A673 (cell line): ENCODE measurements at regions of chr14 and their contacts with region 1.

Region 1: GRCh38 chr14:62604524-62604923 is 440.7 kb downstream of the KCNH5 start:
- DNase-seq: peak; percentile 65
- H3K4me3 ChIP-seq: no peak overlapping the region
- H3K27ac ChIP-seq: peak overlapping the region; percentile 69
- H3K4me1 ChIP-seq: peaks cover 30% of the 10 kb centered on the region
- H3K27me3 ChIP-seq: no peaks in the 10 kb centered on the region
- CTCF ChIP-seq: no peak

Region 2: GRCh38 chr14:62179367-62180018 is 425.0 kb before region 1 on chr14:
- CTCF ChIA-PET with region 1: no interaction called
- POLR2A ChIA-PET with region 1: no interaction called
- intact Hi-C with region 1: loop called (anchors 1 kb)
- DNase-seq: peak; percentile 92
- H3K4me3 ChIP-seq: no peak overlapping the region
- H3K27ac ChIP-seq: peak overlapping the region; percentile 2
- H3K4me1 ChIP-seq: peaks cover 29% of the 10 kb centered on the region
- H3K27me3 ChIP-seq: no peaks in the 10 kb centered on the region
- CTCF ChIP-seq: peak; percentile 79

Region 3: DNA sequence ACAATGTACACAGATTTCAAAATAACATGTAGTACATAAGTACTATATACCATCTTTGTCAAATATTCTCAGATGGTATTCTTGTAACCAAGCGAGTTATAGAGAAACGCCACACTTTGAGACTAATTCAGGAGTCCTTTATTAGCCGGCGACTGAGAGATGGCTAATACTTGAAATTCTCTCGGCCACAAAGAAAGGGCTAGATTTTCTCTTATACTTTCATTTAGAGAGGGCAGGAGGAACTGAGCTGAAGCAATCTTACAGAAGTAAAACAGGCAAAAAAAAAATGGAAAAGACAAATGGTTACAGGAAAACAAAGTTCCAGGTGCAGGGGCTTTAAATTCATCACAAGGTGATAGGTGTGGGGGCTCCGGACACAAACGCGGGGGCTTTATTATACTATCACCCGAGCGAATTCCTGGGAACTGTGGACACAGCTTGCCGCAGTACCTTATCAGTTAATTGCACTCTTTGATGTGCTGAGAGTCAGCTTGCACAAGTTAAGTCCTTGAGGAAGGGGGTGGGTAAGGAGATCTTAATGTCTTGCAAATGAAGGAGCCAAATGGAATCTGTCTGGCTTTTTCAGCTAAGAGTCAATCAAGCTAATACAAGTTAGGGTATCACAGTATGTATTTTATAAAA is 58.4 kb after region 1 on chr14:
- CTCF ChIA-PET with region 1: no interaction called
- POLR2A ChIA-PET with region 1: no interaction called
- intact Hi-C with region 1: no loop called
- DNase-seq: peak; percentile 31
- H3K4me3 ChIP-seq: no peak overlapping the region
- H3K27ac ChIP-seq: no peak overlapping the region
- H3K4me1 ChIP-seq: peaks cover 14% of the 10 kb centered on the region
- H3K27me3 ChIP-seq: no peaks in the 10 kb centered on the region
- CTCF ChIP-seq: no peak

Region 4: GRCh38 chr14:62896932-62897456 is 292.5 kb after region 1 on chr14:
- CTCF ChIA-PET with region 1: no interaction called
- POLR2A ChIA-PET with region 1: no interaction called
- intact Hi-C with region 1: loop called (anchors 10 kb)
- DNase-seq: peak; percentile 49
- H3K4me3 ChIP-seq: peak overlapping the region; percentile 6
- H3K27ac ChIP-seq: peak overlapping the region; percentile 63
- H3K4me1 ChIP-seq: peaks cover 24% of the 10 kb centered on the region
- H3K27me3 ChIP-seq: no peaks in the 10 kb centered on the region
- CTCF ChIP-seq: no peak

Region 5: GRCh38 chr14:63044994-63045611 is 440.6 kb after region 1 on chr14 and contains the start of gene KCNH5:
- CTCF ChIA-PET with region 1: no interaction called
- POLR2A ChIA-PET with region 1: no interaction called
- intact Hi-C with region 1: loop called (anchors 5 kb)
- DNase-seq: peak; percentile 88
- H3K4me3 ChIP-seq: peak within 1 kb of the TSS; percentile 80
- H3K27ac ChIP-seq: no peak within 1 kb of the TSS
- H3K4me1 ChIP-seq: peaks cover 28% of the 10 kb centered on the region
- H3K27me3 ChIP-seq: no peaks in the 10 kb centered on the region
- CTCF ChIP-seq: no peak
- total RNA-seq, gene KCNH5: 27.9 and 31.8 TPM in 2 replicates

Region 6: GRCh38 chr14:63134801-63135200 is 530.3 kb after region 1 on chr14:
- CTCF ChIA-PET with region 1: no interaction called
- POLR2A ChIA-PET with region 1: no interaction called
- intact Hi-C with region 1: loop called (anchors 1 kb)
- DNase-seq: peak; percentile 79
- H3K4me3 ChIP-seq: no peak overlapping the region
- H3K27ac ChIP-seq: no peak overlapping the region
- H3K4me1 ChIP-seq: peaks cover 15% of the 10 kb centered on the region
- H3K27me3 ChIP-seq: no peaks in the 10 kb centered on the region
- CTCF ChIP-seq: peak; percentile 69

Region 7: GRCh38 chr14:63276492-63277342 is 672.2 kb after region 1 on chr14:
- CTCF ChIA-PET with region 1: no interaction called
- POLR2A ChIA-PET with region 1: no interaction called
- intact Hi-C with region 1: loop called (anchors 5 kb)
- DNase-seq: peak; percentile 75
- H3K4me3 ChIP-seq: no peak overlapping the region
- H3K27ac ChIP-seq: no peak overlapping the region
- H3K4me1 ChIP-seq: peaks cover 3% of the 10 kb centered on the region
- H3K27me3 ChIP-seq: no peaks in the 10 kb centered on the region
- CTCF ChIP-seq: peak; percentile 91